PC-3 (cell line): ENCODE measurements at regions of chr2 and their contacts with region 1.

Region 1: GRCh38 chr2:72165792-72166191 is 18.1 kb upstream of the CYP26B1 start:
- DNase-seq: peak; percentile 75
- ATAC-seq: peak; percentile 35; the same call in 1 of the 2 replicates
- H3K4me3 ChIP-seq: no peak overlapping the region
- H3K27ac ChIP-seq: 0 out of 2 replicates have a peak overlapping the region, but pooled peaks have one; percentile 5
- H3K4me1 ChIP-seq: peaks cover 37% of the 10 kb centered on the region
- H3K27me3 ChIP-seq: no peaks in the 10 kb centered on the region
- CTCF ChIP-seq: no peak

Region 2: DNA sequence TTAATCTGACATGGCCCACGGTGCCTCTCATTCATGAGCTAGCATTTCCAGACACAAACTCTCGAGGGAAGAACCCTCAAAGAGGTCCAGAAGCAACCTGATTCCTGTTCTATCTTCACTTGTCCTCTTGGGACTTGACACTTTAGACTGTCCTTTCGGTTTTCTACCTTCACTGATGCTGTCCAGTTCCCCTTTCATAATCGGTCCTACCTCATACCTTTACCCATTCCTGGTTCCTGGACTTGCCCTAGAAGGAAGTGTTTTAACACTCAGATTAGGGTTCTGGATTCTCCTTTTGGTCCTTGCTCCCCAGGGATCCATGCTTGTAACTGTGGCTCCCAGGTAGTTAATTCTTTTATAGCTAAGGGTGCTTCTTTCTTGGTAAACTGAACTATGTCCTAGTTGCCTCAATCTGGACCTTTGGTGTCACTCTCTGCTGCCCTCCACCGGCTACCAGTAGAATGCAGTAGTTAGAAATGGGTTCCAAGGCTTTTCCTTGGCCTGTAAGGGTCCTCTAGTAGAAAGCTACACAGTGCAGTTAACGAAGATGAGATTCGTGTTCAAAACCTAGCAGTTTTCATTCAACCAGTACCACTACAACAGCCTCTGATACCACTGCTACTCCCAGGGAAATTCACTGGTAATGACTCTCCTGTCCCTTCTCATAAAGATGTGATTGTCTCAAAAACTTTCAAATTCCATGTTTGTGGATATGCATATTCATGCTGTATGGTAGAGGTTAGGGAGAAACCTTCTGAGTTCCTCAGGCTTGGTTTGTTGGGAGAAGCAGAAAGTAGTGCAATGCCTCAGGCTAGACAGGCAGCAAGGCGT is 160.0 kb after region 1 on chr2:
- CTCF ChIA-PET with region 1: no interaction called
- POLR2A ChIA-PET with region 1: no interaction called
- intact Hi-C with region 1: loop called (anchors 10 kb)
- DNase-seq: peak; percentile 52
- ATAC-seq: no peak
- H3K4me3 ChIP-seq: no peak overlapping the region
- H3K27ac ChIP-seq: no peak overlapping the region
- H3K4me1 ChIP-seq: no peaks in the 10 kb centered on the region
- H3K27me3 ChIP-seq: no peaks in the 10 kb centered on the region
- CTCF ChIP-seq: peak; percentile 78